ENCODE measurements at regions of chr2 and their contacts with region 1.

Region 1: DNA sequence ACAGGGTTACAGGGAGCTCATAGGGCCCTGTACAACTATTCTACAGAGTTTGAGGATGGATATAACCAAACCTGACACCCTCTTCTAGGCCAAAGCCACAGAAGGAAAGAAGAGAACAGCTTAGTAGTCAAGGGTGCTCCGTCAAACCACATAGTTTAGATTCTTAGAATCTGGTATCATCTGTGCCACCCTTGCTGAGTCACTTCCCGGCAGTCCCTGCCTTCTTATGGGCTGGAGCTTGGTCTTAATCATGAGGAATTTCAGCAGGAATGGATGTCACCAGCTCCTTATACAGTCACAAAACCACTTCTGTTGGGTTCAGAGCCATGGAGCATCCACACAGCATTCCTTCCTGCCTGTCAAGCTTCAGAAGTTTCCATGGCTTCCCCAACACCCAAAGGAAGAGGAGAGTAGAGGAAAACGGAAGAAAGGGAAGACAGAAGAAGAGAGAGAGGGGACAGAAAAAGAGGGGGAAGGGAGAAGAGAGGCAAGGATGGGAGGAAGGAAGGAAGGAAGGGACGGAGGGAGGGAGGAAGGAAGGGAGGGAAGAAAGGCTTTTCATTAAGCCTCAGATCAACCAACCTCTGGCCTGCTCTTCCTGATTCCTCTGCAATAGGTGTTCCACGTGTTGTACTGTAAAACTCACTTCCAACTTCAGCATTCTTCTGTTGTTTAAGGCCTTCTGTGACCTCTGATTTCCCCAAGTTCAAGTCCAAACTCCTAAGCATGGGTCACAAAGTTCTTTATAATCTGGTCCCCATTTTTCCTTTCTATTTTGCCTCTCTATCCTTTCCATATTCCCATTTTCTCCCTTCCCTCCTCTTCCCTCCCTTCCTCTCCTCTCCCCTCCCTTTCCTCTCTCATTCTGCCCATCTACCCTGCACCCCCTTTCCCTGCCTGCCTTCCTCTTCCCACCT is 246.1 kb upstream of the TNP1 start:
- DNase-seq: peak; percentile 95
- ATAC-seq: peak; percentile 93
- H3K4me3 ChIP-seq: no peak overlapping the region
- H3K27ac ChIP-seq: peak overlapping the region; percentile 75
- H3K4me1 ChIP-seq: peaks cover 63% of the 10 kb centered on the region
- H3K27me3 ChIP-seq: no peaks in the 10 kb centered on the region
- CTCF ChIP-seq: no peak

Region 2: DNA sequence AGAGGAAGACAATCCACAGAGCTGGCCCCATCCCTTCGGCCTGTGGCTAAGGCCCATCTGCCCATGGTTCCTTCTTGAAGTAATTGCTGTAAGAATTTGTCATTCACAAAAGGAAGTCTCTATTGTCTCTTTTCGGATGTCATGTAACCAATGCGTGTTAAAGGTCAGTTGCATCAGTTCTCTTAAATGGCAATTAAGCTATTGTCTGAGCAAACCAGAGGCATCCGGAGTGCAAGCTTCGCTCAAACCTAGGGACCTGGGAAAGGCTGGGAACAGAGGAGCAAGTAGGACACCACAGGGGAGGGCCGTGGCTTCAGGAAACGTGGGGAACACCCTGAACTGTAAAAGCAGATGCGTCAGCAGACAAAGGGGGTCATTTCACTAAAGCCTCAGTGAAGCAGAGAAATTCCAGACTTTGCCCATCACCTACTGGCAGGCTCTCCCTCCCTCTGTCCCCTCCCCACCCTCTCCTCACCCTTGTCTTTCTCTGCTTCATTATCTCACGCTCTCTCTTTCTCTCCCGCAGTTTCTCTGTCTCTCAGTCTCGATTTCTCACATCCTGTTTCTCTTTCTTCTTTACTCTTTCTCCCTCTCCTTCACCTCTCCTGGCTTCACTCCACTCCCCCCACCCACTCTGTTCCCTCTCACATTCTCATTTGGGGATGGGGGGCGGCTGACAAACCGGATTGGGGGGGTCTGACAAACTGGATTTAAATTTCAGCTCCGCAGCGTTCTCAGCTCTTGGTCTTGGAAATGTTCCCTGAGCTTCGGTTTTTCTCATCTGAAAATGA is 41.6 kb before region 1 on chr2:
- CTCF ChIA-PET with region 1: no interaction called
- POLR2A ChIA-PET with region 1: no interaction called
- intact Hi-C with region 1: loop called (anchors 2 kb)
- DNase-seq: no peak
- ATAC-seq: no peak
- H3K4me3 ChIP-seq: no peak overlapping the region
- H3K27ac ChIP-seq: no peak overlapping the region
- H3K4me1 ChIP-seq: peaks cover 22% of the 10 kb centered on the region
- H3K27me3 ChIP-seq: no peaks in the 10 kb centered on the region
- CTCF ChIP-seq: no peak

Region 3: DNA sequence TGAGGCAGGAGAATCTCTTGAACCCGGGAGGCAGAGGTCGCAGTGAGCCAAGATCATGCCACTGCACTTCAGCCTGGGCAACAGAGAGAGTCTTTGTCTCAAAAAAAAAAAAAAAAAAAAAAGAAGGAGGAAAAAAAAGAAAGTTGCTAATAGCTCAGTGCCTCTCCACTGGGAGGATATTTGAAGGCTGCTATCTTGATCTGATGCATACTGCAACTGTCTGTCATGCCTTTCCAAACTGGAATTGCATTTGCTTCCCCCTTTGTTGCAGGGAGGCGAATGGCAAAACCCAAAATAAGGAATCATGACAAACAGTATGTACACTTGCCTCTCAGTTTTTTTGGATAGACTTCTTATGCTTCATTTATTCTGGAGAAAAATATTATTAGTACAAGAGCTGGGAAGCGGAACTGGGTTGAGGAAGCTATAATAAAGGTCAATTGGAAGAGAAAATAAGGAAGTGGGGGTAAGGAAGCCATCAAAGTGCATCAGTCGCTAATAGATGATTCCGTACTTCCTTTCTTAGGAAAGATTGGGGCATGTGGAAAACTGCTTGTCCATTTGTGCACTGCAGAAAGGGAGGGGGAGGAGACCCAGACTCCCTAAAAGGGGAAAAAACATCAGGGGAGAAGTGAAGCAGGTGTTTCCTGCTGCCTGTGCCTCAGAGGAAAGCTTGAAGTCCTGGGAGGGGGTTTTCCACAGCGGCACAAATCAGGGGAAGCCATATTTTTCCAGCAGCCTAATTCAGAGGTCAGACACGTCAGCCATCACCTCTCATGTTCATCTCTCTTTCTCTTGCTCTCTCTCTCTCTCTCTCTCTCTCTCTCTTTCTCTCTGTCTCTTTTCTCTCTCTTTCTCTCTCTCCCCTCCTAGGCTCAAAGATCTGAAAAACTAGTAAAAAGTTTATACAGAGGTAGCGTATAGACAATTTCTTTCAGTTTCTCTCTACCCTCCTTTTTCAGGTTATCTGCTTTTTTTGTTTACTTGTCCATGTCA is 55.3 kb after region 1 on chr2:
- CTCF ChIA-PET with region 1: no interaction called
- POLR2A ChIA-PET with region 1: no interaction called
- intact Hi-C with region 1: loop called (anchors 1 kb)
- DNase-seq: peak; percentile 50
- ATAC-seq: no peak
- H3K4me3 ChIP-seq: no peak overlapping the region
- H3K27ac ChIP-seq: peak overlapping the region; percentile 91
- H3K4me1 ChIP-seq: peaks cover 35% of the 10 kb centered on the region
- H3K27me3 ChIP-seq: no peaks in the 10 kb centered on the region
- CTCF ChIP-seq: no peak

Region 4: DNA sequence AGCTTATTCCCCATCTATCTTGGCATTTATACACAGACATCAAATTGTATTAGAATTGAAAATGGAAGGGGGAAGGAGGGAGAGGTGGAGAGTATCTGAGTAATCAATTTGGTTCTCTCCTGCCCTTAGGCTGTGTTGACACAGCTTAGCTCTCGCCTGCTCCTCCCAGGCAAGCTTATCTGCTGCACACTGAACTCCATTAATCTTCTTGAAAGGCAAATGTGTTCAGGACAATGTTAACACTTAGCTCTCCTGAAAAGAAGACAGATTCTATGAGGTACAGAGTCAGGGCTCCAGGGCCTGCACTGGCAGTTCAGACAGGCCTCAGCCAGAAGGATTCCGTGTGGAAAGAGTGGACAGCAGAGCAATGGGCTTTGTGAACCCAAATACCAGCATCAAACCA is 183.9 kb after region 1 on chr2:
- CTCF ChIA-PET with region 1: no interaction called
- POLR2A ChIA-PET with region 1: no interaction called
- intact Hi-C with region 1: loop called (anchors 10 kb)
- DNase-seq: peak; percentile 74
- ATAC-seq: peak; percentile 69
- H3K4me3 ChIP-seq: no peak overlapping the region
- H3K27ac ChIP-seq: 0 out of 2 replicates have a peak overlapping the region, but pooled peaks have one; percentile 9
- H3K4me1 ChIP-seq: peaks cover 37% of the 10 kb centered on the region
- H3K27me3 ChIP-seq: no peaks in the 10 kb centered on the region
- CTCF ChIP-seq: no peak

Measured in PC-3 (cell line).